ENCODE measurements at regions of chr17 and their contacts with region 1.

Region 1: GRCh38 chr17:2244545-2245525 is 58.8 kb downstream of the SMG6 start:
- DNase-seq: peak; percentile 88
- ATAC-seq: peak; percentile 93
- H3K4me3 Mint-ChIP-seq: no peak overlapping the region
- H3K27ac Mint-ChIP-seq: peak overlapping the region; percentile 72
- H3K4me1 Mint-ChIP-seq: peaks cover 86% of the 10 kb centered on the region
- H3K27me3 Mint-ChIP-seq: no peaks in the 10 kb centered on the region

Region 2: GRCh38 chr17:1676401-1676800 is 568.4 kb before region 1 on chr17:
- CTCF ChIA-PET with region 1: no interaction called
- POLR2A ChIA-PET with region 1: no interaction called
- DNase-seq: no peak
- ATAC-seq: no peak
- H3K4me3 Mint-ChIP-seq: no peak overlapping the region
- H3K27ac Mint-ChIP-seq: no peak overlapping the region
- H3K4me1 Mint-ChIP-seq: no peaks in the 10 kb centered on the region
- H3K27me3 Mint-ChIP-seq: no peaks in the 10 kb centered on the region

Region 3: GRCh38 chr17:1947229-1947742 is 297.5 kb before region 1 on chr17:
- CTCF ChIA-PET with region 1: no interaction called
- POLR2A ChIA-PET with region 1: no interaction called
- DNase-seq: no peak
- ATAC-seq: no peak
- H3K4me3 Mint-ChIP-seq: no peak overlapping the region
- H3K27ac Mint-ChIP-seq: no peak overlapping the region
- H3K4me1 Mint-ChIP-seq: no peaks in the 10 kb centered on the region
- H3K27me3 Mint-ChIP-seq: no peaks in the 10 kb centered on the region

Region 4: GRCh38 chr17:2064980-2065785 is 179.7 kb before region 1 on chr17:
- CTCF ChIA-PET with region 1: interaction called, 343 read pairs
- POLR2A ChIA-PET with region 1: interaction called, 4 read pairs
- DNase-seq: peak; percentile 84
- ATAC-seq: peak; percentile 65
- H3K4me3 Mint-ChIP-seq: no peak overlapping the region
- H3K27ac Mint-ChIP-seq: peak overlapping the region; percentile 79
- H3K4me1 Mint-ChIP-seq: peaks cover 82% of the 10 kb centered on the region
- H3K27me3 Mint-ChIP-seq: no peaks in the 10 kb centered on the region

Region 5: DNA sequence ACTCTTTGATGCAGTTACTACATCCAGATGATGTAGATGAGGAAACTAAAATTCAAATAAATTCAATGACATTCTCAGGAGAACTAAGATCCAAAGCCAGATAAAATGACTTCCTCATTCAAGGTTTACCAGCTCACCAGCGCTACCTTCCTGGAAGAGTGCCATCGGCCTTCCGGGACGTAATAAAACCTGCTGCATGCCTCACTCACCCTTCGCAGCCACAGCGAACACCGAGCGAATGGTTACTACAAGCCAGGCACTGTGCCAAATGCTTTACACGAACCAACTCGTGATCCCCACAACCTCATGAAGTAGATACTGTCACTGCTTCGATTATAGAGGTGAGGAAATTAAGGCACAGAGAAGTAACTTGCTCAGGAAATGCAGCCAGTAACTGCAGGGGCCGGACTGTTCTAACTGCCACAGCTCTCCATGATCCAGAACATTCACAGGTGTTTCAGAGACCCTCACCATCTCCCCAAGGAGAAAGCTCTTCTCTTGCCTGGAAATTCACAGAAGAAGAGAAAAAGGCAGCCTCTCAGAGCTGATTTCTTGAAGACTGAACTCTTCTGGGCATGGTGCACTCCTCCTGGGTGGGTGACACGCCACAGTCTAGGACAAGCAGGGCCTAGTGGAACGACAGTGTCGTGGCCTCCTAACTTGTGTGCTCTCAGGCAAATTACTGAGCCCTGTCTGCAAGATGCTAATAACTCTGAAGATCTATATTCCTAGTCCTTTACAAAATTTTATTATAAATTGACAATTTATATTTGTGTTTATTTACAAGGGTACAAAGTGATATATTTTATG is 143.2 kb before region 1 on chr17:
- CTCF ChIA-PET with region 1: interaction called, 11 read pairs
- POLR2A ChIA-PET with region 1: no interaction called
- DNase-seq: peak; percentile 68
- ATAC-seq: peak; percentile 87
- H3K4me3 Mint-ChIP-seq: peak overlapping the region; percentile 34
- H3K27ac Mint-ChIP-seq: peak overlapping the region; percentile 86
- H3K4me1 Mint-ChIP-seq: peaks cover 61% of the 10 kb centered on the region
- H3K27me3 Mint-ChIP-seq: no peaks in the 10 kb centered on the region

Region 6: DNA sequence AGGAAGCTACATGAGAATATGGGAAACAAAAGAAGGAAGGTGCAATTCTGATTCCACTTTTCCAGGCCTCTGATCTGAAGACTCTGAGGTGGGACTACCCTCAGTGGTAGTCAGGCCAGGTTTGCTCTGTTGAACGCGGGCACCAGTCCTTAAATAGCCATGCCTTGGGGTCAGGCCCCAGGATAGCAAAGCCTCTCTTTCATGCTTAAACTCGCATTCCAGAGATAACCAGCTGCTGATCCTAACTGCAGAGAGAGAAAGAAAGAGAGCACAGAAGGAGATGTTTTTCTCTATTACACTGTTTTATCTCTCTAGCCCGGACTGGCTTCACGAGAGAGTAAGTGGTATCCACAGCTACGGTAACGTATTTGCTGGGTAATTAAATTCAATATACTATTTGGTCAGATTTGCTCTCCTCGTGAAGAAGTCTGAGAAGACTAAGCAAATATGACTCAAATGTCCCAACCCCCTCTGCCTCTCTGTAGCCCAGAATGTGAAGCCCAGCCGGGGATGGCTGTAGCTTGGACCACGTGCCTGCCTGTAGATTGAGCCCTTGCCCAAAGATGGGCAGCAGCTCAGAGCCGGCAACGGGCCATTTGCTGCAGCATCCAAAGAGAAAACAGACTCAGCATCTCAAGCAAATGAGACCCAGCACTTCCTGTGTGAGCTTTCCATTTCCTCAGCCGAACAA is 63.5 kb before region 1 on chr17:
- CTCF ChIA-PET with region 1: interaction called, 17 read pairs
- POLR2A ChIA-PET with region 1: no interaction called
- DNase-seq: no peak
- ATAC-seq: no peak
- H3K4me3 Mint-ChIP-seq: no peak overlapping the region
- H3K27ac Mint-ChIP-seq: peak overlapping the region; percentile 53
- H3K4me1 Mint-ChIP-seq: peaks cover 52% of the 10 kb centered on the region
- H3K27me3 Mint-ChIP-seq: no peaks in the 10 kb centered on the region

Region 7: DNA sequence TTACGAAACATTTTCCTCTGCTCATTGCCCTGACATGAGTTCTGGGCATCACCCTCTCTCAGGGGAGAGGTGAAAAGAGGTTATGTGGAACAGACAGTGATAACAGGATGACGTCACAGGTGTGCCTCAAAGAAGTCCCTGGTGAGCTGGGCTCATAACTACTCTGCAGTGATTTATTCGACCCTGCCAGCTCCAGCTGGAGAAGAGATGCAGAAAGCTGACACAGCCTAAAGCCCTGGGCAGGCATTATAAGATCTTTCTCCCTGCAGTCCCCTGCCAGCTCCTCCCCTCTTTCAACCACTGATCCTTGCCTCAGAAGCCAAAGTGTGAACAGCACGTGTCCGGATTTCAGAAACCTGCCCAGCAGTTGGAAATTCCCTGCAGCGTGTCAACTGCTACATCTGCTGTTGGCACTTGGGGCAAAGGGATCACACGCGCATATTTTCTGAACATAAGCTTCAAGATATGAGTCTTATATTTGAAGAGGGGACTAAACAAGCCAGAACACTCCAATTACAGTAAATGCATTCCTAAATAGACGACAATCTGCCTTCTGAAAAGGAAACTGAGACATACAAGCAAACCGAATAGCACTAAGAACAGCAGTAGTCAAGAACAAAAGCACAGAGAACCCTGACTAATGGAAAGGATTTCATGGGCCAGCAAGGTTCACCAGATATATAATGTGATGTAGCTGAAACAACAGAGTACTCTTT is 21.8 kb before region 1 on chr17:
- CTCF ChIA-PET with region 1: interaction called, 38 read pairs
- POLR2A ChIA-PET with region 1: interaction called, 4 read pairs
- DNase-seq: peak; percentile 62
- ATAC-seq: peak; percentile 82
- H3K4me3 Mint-ChIP-seq: no peak overlapping the region
- H3K27ac Mint-ChIP-seq: peak overlapping the region; percentile 26
- H3K4me1 Mint-ChIP-seq: peaks cover 41% of the 10 kb centered on the region
- H3K27me3 Mint-ChIP-seq: no peaks in the 10 kb centered on the region

Region 8: DNA sequence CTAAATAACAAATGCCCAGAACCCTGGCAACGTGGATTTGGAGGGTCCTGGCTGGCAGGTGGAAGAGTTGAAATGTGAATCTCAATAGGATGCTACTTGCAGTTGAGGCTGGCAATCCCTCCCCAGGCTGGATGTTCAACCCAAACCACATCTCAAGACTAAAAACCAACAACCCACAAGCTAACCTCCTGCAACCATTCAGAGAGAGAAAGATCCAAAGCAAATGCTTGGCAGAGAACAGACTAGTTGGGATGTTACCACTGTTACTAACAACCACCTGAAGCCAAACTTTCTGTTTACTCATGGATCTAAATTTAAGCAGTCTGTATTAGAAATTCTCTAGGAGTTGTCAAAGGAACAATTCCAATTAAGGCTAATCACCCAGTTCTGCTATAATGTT is 30.9 kb after region 1 on chr17:
- CTCF ChIA-PET with region 1: interaction called, 61 read pairs
- POLR2A ChIA-PET with region 1: no interaction called
- DNase-seq: peak; percentile 71
- ATAC-seq: peak; percentile 80
- H3K4me3 Mint-ChIP-seq: peak overlapping the region; percentile 26
- H3K27ac Mint-ChIP-seq: peak overlapping the region; percentile 85
- H3K4me1 Mint-ChIP-seq: peaks cover 76% of the 10 kb centered on the region
- H3K27me3 Mint-ChIP-seq: no peaks in the 10 kb centered on the region

Region 9: GRCh38 chr17:2380226-2380922 is 135.5 kb after region 1 on chr17:
- CTCF ChIA-PET with region 1: no interaction called
- POLR2A ChIA-PET with region 1: no interaction called
- DNase-seq: no peak
- ATAC-seq: no peak
- H3K4me3 Mint-ChIP-seq: no peak overlapping the region
- H3K27ac Mint-ChIP-seq: no peak overlapping the region
- H3K4me1 Mint-ChIP-seq: peaks cover 3% of the 10 kb centered on the region
- H3K27me3 Mint-ChIP-seq: no peaks in the 10 kb centered on the region

Region 10: GRCh38 chr17:2602597-2603017 is 357.8 kb after region 1 on chr17:
- CTCF ChIA-PET with region 1: no interaction called
- POLR2A ChIA-PET with region 1: no interaction called
- DNase-seq: no peak
- ATAC-seq: peak; percentile 44
- H3K4me3 Mint-ChIP-seq: no peak overlapping the region
- H3K27ac Mint-ChIP-seq: no peak overlapping the region
- H3K4me1 Mint-ChIP-seq: peaks cover 40% of the 10 kb centered on the region
- H3K27me3 Mint-ChIP-seq: no peaks in the 10 kb centered on the region